Activated CD4-positive, alpha-beta T cell treated with anti-CD3 and anti-CD28 coated beads, Interleukin-2, amount 10 ng/mL, durations not matched to agents 24 days and 14 days (primary cell): ENCODE measurements at regions of chrX and their contacts with region 1.

Region 1: DNA sequence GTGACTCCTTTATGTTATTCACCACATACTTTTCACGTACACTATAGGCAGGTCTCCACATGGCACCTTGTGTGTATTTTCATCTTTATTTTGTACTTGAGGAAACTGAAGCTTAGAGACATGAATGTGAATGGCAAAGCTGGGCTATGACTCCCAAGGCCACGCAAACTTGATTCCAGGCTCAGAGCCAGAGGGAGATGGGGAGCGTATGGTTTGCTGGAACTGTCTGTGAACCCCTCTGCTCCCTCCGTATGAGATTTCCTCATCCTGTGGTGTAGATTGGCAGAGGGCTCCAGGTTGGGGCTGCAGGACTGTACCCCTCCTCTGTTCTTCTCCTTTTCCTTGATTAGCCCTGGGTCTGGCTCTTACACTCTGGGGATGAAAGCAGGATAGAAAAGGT is 16.1 kb upstream of the STARD8 start:
- DNase-seq: no peak
- H3K4me3 Mint-ChIP-seq: no peak overlapping the region
- H3K27ac Mint-ChIP-seq: no peak overlapping the region
- H3K4me1 Mint-ChIP-seq: no peaks in the 10 kb centered on the region
- H3K27me3 Mint-ChIP-seq: no peaks in the 10 kb centered on the region

Region 2: DNA sequence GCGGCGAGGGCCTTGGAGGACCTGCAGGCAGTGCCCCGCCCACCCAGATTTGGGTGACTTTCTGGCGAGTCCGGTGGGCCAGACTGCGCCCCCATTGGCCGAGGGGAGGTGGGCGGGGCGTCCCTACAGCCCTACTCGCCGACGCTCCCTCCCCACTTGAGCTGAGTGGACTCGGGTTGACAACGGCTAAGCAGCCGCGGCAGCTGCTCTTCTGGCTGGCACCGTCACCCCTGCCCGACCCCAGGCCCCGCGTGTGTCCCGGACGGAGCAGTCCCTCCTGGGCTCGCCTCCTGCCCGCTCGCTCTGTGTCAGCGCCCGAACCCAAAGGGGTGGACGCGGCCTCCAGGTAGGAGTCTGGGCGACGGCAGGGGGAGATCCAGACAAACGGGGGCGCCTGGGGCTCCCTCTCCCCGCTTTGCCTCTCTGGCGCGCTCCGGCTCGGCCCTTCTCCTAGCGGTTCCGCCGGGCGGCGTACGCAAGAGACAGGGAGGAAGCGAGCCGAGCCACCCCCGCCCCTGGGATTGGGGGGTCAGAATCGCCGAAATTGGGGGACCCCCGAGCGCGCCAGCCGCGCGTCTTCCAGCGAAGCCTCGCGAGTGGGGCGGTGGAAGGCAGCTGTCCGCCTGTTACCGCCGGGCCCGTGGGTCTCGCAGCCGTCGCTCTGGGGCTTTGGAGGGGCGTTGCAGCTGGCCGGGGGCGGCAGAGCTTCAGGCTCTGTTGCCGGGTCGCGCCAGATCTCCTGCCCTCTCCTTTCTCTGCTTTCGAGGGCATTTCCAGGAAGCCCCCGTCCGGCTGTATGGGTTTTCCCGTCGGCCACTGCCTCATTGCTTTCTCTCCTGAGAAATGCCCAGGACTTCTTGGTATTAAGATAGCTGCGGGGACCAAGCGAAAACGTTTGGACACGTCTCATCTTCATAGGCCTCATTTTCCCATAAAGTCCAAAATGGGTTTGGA is 62.4 kb after region 1 on chrX:
- intact Hi-C with region 1: loop called (anchors 2 kb)
- DNase-seq: peak; percentile 67
- H3K4me3 Mint-ChIP-seq: peak overlapping the region; percentile 79
- H3K27ac Mint-ChIP-seq: peak overlapping the region; percentile 58
- H3K4me1 Mint-ChIP-seq: peaks cover 28% of the 10 kb centered on the region
- H3K27me3 Mint-ChIP-seq: no peaks in the 10 kb centered on the region